ENCODE measurements at regions of chr14 and their contacts with region 1.

Region 1: DNA sequence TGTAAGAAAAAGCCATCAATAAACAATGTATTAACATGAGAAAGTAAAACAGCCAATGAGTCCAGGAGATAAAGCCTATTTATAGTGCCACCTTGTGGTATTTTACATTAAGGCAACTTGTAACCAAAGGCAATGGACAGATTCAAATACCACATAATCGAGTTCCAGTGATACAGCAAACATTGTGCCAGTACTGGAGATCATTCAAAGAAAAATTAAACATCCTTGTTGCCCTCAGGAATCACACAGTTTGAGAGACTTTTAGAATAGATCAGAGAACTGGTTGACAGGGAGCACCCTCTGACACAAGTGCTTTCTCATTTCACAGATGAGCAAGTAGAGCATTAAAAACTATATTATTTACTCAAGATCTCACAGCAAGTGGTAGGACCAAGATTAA is 98.1 kb downstream of the DDHD1 start:
- DNase-seq: no peak
- H3K4me3 Mint-ChIP-seq: no peak overlapping the region
- H3K27ac Mint-ChIP-seq: no peak overlapping the region
- H3K4me1 Mint-ChIP-seq: peaks cover 2% of the 10 kb centered on the region
- H3K27me3 Mint-ChIP-seq: no peaks in the 10 kb centered on the region

Region 2: DNA sequence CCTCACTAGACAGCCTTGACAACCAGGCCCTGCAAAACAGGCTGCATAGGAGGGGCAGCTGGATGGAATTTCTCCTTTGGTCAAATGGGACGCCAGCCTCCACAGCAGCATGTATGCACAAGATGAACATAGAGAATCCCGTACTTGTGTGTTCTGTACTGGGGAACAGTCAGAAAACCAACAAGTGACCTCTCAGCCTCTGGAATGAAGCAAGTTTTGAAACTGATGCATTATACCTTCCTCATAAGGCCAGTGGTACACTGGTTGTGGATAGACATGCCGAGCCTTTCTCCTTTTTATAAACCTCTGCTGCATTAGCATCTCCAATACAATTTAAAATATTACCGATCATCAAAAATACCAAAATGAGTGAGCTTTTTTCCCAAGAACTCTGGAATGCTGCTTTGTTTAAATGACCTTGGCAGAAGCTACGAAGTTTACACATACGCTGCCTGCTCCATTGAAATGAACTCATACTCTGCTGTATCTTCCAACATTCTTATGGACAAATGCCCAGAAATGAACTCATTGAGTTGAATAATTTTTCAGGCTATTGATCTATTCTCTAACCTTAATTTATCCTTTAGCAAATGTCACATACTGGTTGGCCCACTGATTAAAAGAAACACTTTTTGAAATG is 56.5 kb before region 1 on chr14:
- CTCF ChIA-PET with region 1: no interaction called
- DNase-seq: no peak
- H3K4me3 Mint-ChIP-seq: no peak overlapping the region
- H3K27ac Mint-ChIP-seq: no peak overlapping the region
- H3K4me1 Mint-ChIP-seq: peaks cover 2% of the 10 kb centered on the region
- H3K27me3 Mint-ChIP-seq: peaks cover 10% of the 10 kb centered on the region

Region 3: GRCh38 chr14:53109105-53110041 is 54.4 kb after region 1 on chr14:
- CTCF ChIA-PET with region 1: interaction called, 10 read pairs
- DNase-seq: peak; percentile 83
- H3K4me3 Mint-ChIP-seq: no peak overlapping the region
- H3K27ac Mint-ChIP-seq: no peak overlapping the region
- H3K4me1 Mint-ChIP-seq: peaks cover 9% of the 10 kb centered on the region
- H3K27me3 Mint-ChIP-seq: no peaks in the 10 kb centered on the region

Region 4: GRCh38 chr14:53306267-53306721 is 251.3 kb after region 1 on chr14:
- CTCF ChIA-PET with region 1: interaction called, 12 read pairs
- DNase-seq: peak; percentile 65
- H3K4me3 Mint-ChIP-seq: peak overlapping the region; percentile 39
- H3K27ac Mint-ChIP-seq: no peak overlapping the region
- H3K4me1 Mint-ChIP-seq: peaks cover 15% of the 10 kb centered on the region
- H3K27me3 Mint-ChIP-seq: peaks cover 9% of the 10 kb centered on the region